H1 (cell line): ENCODE measurements at regions of chr9 and their contacts with region 1.

Region 1: DNA sequence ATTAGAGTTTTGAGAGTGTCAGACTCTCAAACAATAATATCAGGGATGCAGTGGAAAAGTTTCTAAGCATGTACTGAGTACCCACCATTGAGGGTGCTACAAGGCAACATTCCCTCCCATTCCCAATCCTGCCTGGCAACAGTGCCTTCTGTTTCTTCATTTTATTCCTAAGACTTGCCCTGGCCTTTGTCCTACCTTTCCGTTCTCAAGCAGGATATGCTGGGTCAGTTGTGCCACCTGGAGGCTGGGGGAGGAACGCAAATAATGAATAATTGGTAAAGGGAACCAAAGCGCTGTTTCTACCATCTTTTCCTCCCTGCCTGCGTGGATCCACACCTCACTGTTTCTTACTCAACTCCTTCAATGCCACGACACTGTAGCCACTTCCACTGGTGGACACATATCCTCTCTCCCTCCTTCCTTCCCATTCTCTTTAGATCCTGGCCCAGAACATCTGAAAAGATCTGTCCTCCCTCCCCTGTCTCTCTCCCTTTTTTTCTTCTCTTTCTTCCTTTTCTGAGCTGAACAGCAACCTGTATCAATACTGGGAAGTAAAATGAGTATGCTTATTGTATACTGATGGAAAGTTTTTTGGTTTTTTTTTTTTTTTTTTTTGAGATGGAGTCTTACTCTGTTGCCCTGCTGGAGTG is 149.5 kb downstream of the C9orf152 start:
- DNase-seq: peak; percentile 66 to 69
- H3K4me3 ChIP-seq: no peak overlapping the region
- H3K27ac ChIP-seq: no peak overlapping the region
- H3K4me1 ChIP-seq: peaks cover 0 to 7% (median 4%) of the 10 kb centered on the region in 4 experiments; a peak in 4 of 7 replicates
- H3K27me3 ChIP-seq: no peaks in the 10 kb centered on the region
- CTCF ChIP-seq: peak; percentile 61 to 87 (median 81)
- EP300 ChIP-seq: no peak
- POLR2A ChIP-seq: no peak
- RAD21 ChIP-seq: peak; percentile 94 to 96

Region 2: DNA sequence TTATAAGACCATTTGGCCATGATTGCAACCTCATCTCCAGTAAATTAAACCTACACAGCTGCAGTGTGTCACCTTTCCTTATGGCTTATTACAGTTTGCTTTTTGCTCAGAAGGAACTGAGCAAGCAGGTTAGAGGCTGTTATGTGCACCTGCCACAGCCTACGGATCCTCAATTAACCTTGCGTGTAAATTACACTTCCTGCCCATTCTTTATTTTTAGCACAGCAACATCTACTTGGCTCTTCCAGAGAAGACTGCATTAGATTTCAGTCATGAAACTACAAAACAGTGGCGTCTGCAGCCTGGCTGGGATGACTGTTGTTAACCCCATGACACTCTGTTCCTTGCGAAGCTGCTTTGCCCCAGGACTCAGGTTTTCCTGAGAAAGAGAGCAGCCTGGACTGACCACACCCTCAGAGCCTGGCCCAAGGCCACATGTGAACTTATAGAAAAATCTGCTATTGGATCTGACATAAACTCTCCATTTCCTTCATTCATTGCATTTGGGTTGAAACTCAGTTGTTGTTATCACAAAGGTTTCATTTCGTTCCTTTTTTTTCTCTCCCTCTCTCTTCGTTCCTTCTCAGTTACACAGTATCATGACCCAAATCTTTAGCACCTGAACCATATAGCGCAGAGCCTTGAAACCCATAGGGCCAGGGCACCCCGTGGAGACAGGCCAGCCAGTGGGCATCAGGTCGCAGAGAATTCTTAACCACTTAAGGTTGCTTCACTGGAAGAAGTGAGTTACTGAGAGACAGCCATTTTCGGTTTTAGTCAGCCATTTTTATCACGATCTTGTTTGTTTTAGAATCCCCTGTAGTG is 139.9 kb before region 1 on chr9:
- CTCF ChIA-PET with region 1: interaction called, 14 read pairs
- POLR2A ChIA-PET with region 1: no interaction called
- DNase-seq: no peak
- H3K4me3 ChIP-seq: no peak overlapping the region
- H3K27ac ChIP-seq: no peak overlapping the region
- H3K4me1 ChIP-seq: peaks cover 0 to 2% (median 0%) of the 10 kb centered on the region in 4 experiments; a peak in 1 of 7 replicates
- H3K27me3 ChIP-seq: no peaks in the 10 kb centered on the region
- CTCF ChIP-seq: no peak
- EP300 ChIP-seq: no peak
- POLR2A ChIP-seq: no peak
- RAD21 ChIP-seq: no peak

Region 3: GRCh38 chr9:110007477-110008270 is 50.8 kb before region 1 on chr9:
- CTCF ChIA-PET with region 1: interaction called, 16 read pairs
- POLR2A ChIA-PET with region 1: no interaction called
- DNase-seq: no peak
- H3K4me3 ChIP-seq: no peak overlapping the region
- H3K27ac ChIP-seq: no peak overlapping the region
- H3K4me1 ChIP-seq: no peaks in the 10 kb centered on the region; a peak in 2 of 7 replicates
- H3K27me3 ChIP-seq: no peaks in the 10 kb centered on the region
- CTCF ChIP-seq: no peak
- EP300 ChIP-seq: no peak
- POLR2A ChIP-seq: no peak
- RAD21 ChIP-seq: no peak

Region 4: DNA sequence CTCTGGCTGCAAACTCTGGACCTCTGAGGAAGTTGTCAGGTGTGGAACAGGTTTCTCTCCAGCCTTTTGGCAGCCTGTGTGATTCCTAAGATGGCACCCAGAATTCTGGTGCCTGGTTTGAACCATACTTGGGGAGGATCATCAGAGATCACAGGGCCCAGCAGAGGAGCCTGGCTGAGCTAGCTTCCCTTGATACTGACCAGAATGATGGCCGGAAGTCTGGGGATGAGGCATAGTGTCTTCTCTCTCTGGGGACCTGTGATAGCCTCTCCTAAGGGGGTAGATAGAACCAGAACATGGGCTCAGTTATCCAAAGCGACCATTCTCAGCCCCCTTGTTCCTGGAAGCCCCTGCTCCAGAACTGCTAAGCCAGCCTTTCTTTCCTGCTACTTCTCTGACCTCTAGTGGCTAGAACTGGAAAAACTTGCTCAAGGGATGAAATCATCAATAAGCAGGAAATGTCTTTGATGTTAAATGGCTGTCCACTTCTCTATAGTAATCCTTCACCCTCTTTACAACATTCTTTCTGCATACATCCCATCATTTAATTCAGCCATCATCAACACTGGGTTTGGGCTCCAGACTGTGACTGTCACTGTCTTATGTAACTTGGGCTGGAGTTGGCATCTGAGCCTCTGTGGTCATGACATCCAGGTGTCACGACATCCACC is 94.4 kb after region 1 on chr9:
- CTCF ChIA-PET with region 1: interaction called, 11 read pairs
- POLR2A ChIA-PET with region 1: no interaction called
- DNase-seq: peak in 1 of 2 experiments; percentile 53
- H3K4me3 ChIP-seq: no peak overlapping the region
- H3K27ac ChIP-seq: no peak overlapping the region
- H3K4me1 ChIP-seq: peaks cover 0 to under 1% (median under 1%) of the 10 kb centered on the region in 4 experiments; a peak in 2 of 7 replicates
- H3K27me3 ChIP-seq: no peaks in the 10 kb centered on the region
- CTCF ChIP-seq: peak in 2 of 3 experiments; percentile 78 to 80; a peak in 3 of 4 replicates
- EP300 ChIP-seq: no peak
- POLR2A ChIP-seq: no peak
- RAD21 ChIP-seq: peak; percentile 95 to 96